Kidney (tissue), 22 donors: ENCODE measurements at regions of chrX and their contacts with region 1.

Region 1: DNA sequence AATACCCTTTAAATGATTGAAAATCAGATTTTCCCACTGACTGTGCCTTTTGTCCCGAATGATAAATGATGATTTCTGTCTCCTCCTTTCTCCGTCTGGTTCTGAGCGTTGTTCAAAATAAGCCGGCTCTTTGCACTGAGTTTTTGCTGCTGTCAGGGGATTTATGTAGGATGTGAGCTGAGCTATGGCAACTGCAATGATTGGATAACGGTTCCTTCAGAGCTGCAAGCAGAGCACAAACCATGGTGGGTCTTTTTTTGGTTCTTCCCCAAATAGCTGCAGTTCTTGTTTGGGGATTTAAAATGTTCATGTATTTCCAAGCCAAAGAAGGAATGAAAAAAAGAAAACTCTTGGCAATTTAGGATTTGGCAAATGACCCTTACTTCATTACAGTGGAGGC is 124.5 kb upstream of the CASK start:
- DNase-seq: no peak
- H3K4me3 ChIP-seq: no peak overlapping the region
- H3K27ac ChIP-seq: no peak overlapping the region
- H3K4me1 ChIP-seq: no peaks in the 10 kb centered on the region
- H3K27me3 ChIP-seq: no peaks in the 10 kb centered on the region
- CTCF ChIP-seq: no peak

Region 2: DNA sequence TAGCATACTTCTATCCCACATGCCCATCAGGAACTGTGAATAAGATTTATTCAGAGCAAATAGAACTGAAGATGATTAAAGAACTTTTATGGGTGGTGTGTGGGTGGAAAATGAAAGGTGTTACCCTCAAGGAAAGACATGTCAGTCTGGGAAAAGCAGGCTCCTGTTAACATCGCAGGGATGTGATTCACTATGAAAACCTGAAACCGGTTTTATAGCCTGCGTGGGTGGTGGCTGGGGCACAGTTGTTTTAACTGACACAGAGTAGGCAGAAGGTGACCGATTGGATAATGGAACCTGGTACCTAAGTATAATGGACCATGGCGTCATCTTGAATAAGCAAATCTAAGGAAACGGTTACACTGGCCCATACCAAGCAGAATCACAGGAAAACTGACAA is 63.2 kb before region 1 on chrX:
- intact Hi-C with region 1: loop called (anchors 10 kb)
- DNase-seq: peak in 4 of 5 donors; percentile 27 to 60 (median 52)
- H3K4me3 ChIP-seq: no peak overlapping the region
- H3K27ac ChIP-seq: no peak overlapping the region
- H3K4me1 ChIP-seq: no peaks in the 10 kb centered on the region
- H3K27me3 ChIP-seq: no peaks in the 10 kb centered on the region
- CTCF ChIP-seq: no peak